ENCODE measurements at regions of chr17 and their contacts with region 1.

Region 1: DNA sequence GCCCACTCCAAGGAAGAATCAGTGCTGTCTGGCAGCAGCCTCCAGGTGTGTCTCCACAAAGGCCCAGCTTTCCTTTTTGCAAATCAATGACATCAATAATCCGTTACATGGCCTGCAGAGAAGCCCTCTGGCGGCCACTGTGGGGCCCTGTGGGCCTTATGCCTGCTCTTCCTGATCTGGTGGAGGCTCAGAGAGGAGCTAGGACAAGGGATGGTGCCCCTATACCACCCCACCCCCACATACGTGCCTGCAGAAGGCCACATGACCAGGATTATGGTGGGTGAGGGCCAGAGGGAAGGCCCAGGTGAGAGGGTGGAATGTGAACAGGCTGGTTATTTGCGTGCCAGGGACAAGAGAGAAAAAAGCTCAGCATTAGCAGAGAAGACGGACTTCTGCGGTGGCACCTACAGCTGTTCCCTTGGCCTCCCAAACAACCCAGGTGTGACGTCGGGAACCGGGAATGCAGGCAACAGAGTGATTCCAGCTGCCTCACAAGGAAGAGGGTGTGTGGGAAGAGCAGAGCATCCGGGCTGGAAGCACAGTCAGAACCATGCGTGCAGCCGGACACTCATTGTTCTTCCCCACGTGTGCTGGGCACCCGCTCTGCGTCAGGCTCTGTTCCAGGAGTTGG is 22.5 kb downstream of the EIF4A3 start:
- DNase-seq: peak; percentile 75
- ATAC-seq: peak; percentile 95
- H3K4me3 ChIP-seq: peak overlapping the region in 1 of 3 experiments; percentile 0; a peak in 1 of 6 replicates
- H3K27ac ChIP-seq: no peak overlapping the region
- H3K4me1 ChIP-seq: peaks cover 20% of the 10 kb centered on the region
- H3K27me3 ChIP-seq: no peaks in the 10 kb centered on the region; a peak in 2 of 5 replicates
- CTCF ChIP-seq: peak; percentile 89
- EP300 ChIP-seq: 0 out of 4 replicates have a peak, but pooled peaks of 1 of the 2 experiments have one; percentile 23
- POLR2A ChIP-seq: no peak
- RAD21 ChIP-seq: peak; percentile 84

Region 2: GRCh38 chr17:80082403-80083135 is 41.9 kb before region 1 on chr17:
- CTCF ChIA-PET with region 1: interaction called, 13 read pairs
- POLR2A ChIA-PET with region 1: no interaction called
- in situ Hi-C with region 1: no loop called
- intact Hi-C with region 1: loop called (anchors 2 kb)
- DNase-seq: peak; percentile 78
- ATAC-seq: peak; percentile 72
- H3K4me3 ChIP-seq: peak overlapping the region in 1 of 3 experiments; percentile 32; a peak in 2 of 6 replicates
- H3K27ac ChIP-seq: no peak overlapping the region
- H3K4me1 ChIP-seq: peaks cover 23% of the 10 kb centered on the region
- H3K27me3 ChIP-seq: peaks cover 8 to 47% of the 10 kb centered on the region in 2 experiments
- CTCF ChIP-seq: peak; percentile 89
- EP300 ChIP-seq: no peak
- POLR2A ChIP-seq: no peak
- RAD21 ChIP-seq: peak; percentile 71

Region 3: DNA sequence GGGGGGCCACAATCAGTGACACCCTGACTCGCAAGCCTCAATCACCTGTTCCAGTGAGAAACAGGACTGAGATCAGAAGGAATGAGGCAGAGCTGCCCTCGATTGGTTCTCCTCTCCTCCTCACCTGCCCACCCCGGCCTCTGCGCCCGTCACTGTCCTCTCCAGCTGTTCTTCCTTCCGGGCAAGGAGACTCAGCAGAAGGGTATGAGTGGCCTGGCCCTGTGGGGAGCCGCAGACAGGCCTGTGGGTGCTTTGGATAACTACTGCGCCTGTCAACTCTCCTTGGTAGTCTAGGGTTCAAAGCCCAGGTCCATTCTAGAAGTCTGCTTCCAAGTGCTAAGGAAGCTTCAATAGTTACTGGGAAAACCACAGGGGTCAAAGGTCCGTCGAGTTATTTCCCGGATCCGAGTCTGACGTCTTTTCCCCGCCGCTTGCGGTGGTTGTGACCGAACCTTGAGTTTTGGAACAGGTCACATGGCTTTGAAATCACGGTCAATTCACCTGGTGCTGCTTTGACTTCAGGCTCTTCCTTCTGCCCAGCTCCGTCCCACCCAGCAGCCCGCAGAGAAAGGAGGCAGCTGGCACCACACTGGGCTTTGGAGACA is 53.6 kb after region 1 on chr17:
- CTCF ChIA-PET with region 1: no interaction called
- POLR2A ChIA-PET with region 1: no interaction called
- in situ Hi-C with region 1: no loop called
- intact Hi-C with region 1: no loop called
- DNase-seq: no peak
- ATAC-seq: no peak
- H3K4me3 ChIP-seq: no peak overlapping the region
- H3K27ac ChIP-seq: no peak overlapping the region
- H3K4me1 ChIP-seq: peaks cover 14% of the 10 kb centered on the region
- H3K27me3 ChIP-seq: peaks cover 15 to 80% of the 10 kb centered on the region in 2 experiments
- CTCF ChIP-seq: no peak
- EP300 ChIP-seq: no peak
- POLR2A ChIP-seq: no peak
- RAD21 ChIP-seq: no peak